Spleen (tissue), 13 donors: ENCODE measurements at regions of chr11 and their contacts with region 1.

Region 1: GRCh38 chr11:59615637-59616395 is at the start of gene OSBP:
- DNase-seq: peak; percentile 99
- H3K4me3 ChIP-seq: peak within 1 kb of the TSS; percentile 64 to 90 (median 70)
- H3K27ac ChIP-seq: peak within 1 kb of the TSS; percentile 78 to 99 (median 96)
- H3K4me1 ChIP-seq: peaks cover 33 to 53% (median 46%) of the 10 kb centered on the region in 6 donors
- H3K27me3 ChIP-seq: no peaks in the 10 kb centered on the region
- CTCF ChIP-seq: peak in 6 of 11 experiments; percentile 9 to 52 (median 36)
- POLR2A ChIP-seq: peak in 1 of 3 donors; percentile 30
- total RNA-seq, gene OSBP: 33.9 to 39.9 (median 35.6) TPM

Region 2: GRCh38 chr11:59560702-59561469 is 54.9 kb before region 1 on chr11:
- intact Hi-C with region 1: loop called (anchors 10 kb)
- DNase-seq: peak; percentile 94
- H3K4me3 ChIP-seq: peak overlapping the region; percentile 70 to 94 (median 83)
- H3K27ac ChIP-seq: peak overlapping the region; percentile 79 to 94 (median 87)
- H3K4me1 ChIP-seq: peaks cover 24 to 73% (median 37%) of the 10 kb centered on the region in 6 donors
- H3K27me3 ChIP-seq: peaks cover 0 to 16% (median 0%) of the 10 kb centered on the region in 7 donors
- CTCF ChIP-seq: no peak
- POLR2A ChIP-seq: no peak

Region 3: DNA sequence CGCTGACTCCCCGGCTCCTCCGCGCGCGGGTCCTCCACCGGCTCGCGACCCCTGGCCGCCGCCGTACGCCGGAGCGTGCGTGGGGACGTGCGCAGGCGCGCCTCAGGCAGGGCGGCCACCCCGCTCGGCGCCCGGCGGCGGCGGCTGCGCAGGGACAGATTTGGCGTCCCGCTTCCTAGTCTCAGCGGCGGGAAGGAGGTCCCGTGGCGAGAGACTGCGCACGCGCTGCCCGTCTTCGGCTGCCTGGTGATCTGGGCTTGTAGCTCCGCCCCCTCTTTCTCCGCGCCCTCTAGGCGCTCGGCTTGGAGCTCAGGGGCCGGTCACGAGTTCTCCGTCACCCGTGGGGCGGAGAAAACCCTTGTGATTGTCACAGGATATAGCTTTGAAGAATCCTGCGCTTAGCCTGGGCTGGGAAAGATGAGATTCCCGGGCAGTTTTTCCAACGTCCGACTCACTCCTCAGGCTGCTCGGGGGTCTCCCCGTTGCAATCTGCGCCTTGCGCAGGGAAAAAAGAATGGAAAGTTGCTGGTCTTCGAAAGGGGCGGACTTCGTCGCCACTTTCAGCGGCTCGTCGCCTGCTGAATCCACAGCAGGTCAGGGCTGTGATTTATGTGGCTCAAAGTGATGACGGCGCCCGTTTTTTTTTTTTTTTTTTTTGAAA is 53.3 kb after region 1 on chr11 and contains the start of gene PATL1:
- intact Hi-C with region 1: loop called (anchors 10 kb)
- DNase-seq: peak; percentile 100
- H3K4me3 ChIP-seq: peak within 1 kb of the TSS; percentile 60 to 94 (median 75)
- H3K27ac ChIP-seq: peak within 1 kb of the TSS; percentile 87 to 99 (median 98)
- H3K4me1 ChIP-seq: peaks cover 18 to 57% (median 40%) of the 10 kb centered on the region in 6 donors
- H3K27me3 ChIP-seq: no peaks in the 10 kb centered on the region
- CTCF ChIP-seq: peak in 3 of 11 experiments; percentile 0 to 27 (median 9)
- POLR2A ChIP-seq: peak; percentile 53 to 80 (median 80)
- total RNA-seq, gene PATL1: 24.0 to 47.1 (median 35.5) TPM

Region 4: GRCh38 chr11:59776210-59777066 is 160.6 kb after region 1 on chr11:
- intact Hi-C with region 1: no loop called
- DNase-seq: no peak
- H3K4me3 ChIP-seq: no peak overlapping the region
- H3K27ac ChIP-seq: peak overlapping the region in 1 of 8 donors; percentile 18
- H3K4me1 ChIP-seq: peaks cover 0 to 20% (median 9%) of the 10 kb centered on the region in 6 donors
- H3K27me3 ChIP-seq: no peaks in the 10 kb centered on the region
- CTCF ChIP-seq: no peak
- POLR2A ChIP-seq: no peak

Region 5: GRCh38 chr11:59960502-59961381 is 344.9 kb after region 1 on chr11:
- intact Hi-C with region 1: no loop called
- DNase-seq: no peak
- H3K4me3 ChIP-seq: no peak overlapping the region
- H3K27ac ChIP-seq: peak overlapping the region in 6 of 8 donors; percentile 2 to 67 (median 28)
- H3K4me1 ChIP-seq: peaks cover 0 to 4% (median 0%) of the 10 kb centered on the region in 6 donors
- H3K27me3 ChIP-seq: peaks cover 0 to 4% (median 0%) of the 10 kb centered on the region in 7 donors
- CTCF ChIP-seq: no peak
- POLR2A ChIP-seq: no peak